ENCODE measurements at regions of chr14 and their contacts with region 1.

Region 1: DNA sequence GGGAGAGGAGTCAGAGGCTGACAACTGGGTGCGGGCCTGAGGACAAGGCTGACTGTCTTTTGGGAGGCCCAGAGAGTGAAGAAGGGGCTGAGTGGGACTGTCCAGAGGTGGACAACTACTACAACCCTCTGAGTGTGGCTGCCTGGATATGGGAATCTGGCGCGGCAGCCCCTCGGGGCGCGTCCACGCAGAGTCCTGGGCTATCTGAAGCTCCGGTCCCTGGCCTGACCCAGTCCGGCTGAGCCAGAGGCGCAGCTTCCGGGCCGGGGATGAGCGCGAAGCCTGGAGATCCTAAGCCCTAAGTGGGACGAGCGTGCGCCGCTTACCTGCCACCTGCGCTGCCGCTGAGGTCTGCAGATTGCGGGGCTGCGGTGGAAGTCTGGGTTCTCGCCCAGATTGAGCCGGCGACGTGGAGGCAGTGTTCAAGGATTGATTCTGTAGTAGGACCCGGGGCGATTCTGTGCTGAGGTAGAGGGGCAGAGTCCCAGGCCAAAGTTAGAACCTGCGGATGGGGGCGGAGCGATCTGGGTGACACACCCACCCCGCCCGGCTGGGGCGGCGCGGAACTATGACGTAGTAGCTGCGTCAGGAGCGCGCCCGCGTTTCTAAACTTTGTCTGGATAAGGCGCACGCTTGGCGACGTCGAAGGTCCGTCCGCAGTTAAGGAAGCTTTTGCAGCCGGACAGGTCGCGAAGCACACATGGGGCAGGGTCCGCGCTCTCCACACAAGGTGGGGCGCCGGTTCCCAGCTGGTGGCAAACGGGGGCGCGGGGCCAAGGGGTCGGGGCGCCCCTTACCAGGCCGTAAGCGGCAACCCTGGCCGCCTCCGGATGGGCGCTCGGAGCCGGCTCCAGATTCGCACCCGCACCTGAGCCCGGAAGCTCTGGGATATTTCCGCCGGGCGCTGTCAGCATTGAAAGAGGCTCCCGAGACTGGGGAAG is at the starts of genes DHRS1 and NOP9:
- DNase-seq: peak; percentile 91
- H3K4me3 Mint-ChIP-seq: peak within 1 kb of the TSS; percentile 95
- H3K27ac Mint-ChIP-seq: peak within 1 kb of the TSS; percentile 78
- H3K4me1 Mint-ChIP-seq: peaks cover 33% of the 10 kb centered on the region
- H3K27me3 Mint-ChIP-seq: no peaks in the 10 kb centered on the region
- CTCF ChIP-seq: no peak
- total RNA-seq, gene DHRS1: 29.2 and 29.7 TPM in 2 replicates
- total RNA-seq, gene NOP9: 29.8 and 31.9 TPM in 2 replicates

Region 2: GRCh38 chr14:24108336-24108874 is 191.1 kb before region 1 on chr14:
- CTCF ChIA-PET with region 1: interaction called, 5 read pairs
- POLR2A ChIA-PET with region 1: interaction called, 4 read pairs
- intact Hi-C with region 1: loop called (anchors 5 kb)
- DNase-seq: no peak
- H3K4me3 Mint-ChIP-seq: no peak overlapping the region
- H3K27ac Mint-ChIP-seq: no peak overlapping the region
- H3K4me1 Mint-ChIP-seq: peaks cover 11% of the 10 kb centered on the region
- H3K27me3 Mint-ChIP-seq: no peaks in the 10 kb centered on the region
- CTCF ChIP-seq: no peak

Region 3: GRCh38 chr14:24232121-24232644 is 67.3 kb before region 1 on chr14 and contains the start of gene NEDD8:
- CTCF ChIA-PET with region 1: interaction called, 414 read pairs
- POLR2A ChIA-PET with region 1: interaction called, 16 read pairs
- intact Hi-C with region 1: no loop called
- DNase-seq: peak; percentile 98
- H3K4me3 Mint-ChIP-seq: peak within 1 kb of the TSS; percentile 77
- H3K27ac Mint-ChIP-seq: peak within 1 kb of the TSS; percentile 70
- H3K4me1 Mint-ChIP-seq: peaks cover 24% of the 10 kb centered on the region
- H3K27me3 Mint-ChIP-seq: no peaks in the 10 kb centered on the region
- CTCF ChIP-seq: no peak
- total RNA-seq, gene NEDD8: 233 and 243 TPM in 2 replicates

Region 4: GRCh38 chr14:24259252-24259995 is 40.1 kb before region 1 on chr14:
- CTCF ChIA-PET with region 1: interaction called, 392 read pairs
- POLR2A ChIA-PET with region 1: interaction called, 62 read pairs
- intact Hi-C with region 1: no loop called
- DNase-seq: peak; percentile 66
- H3K4me3 Mint-ChIP-seq: peak overlapping the region; percentile 57
- H3K27ac Mint-ChIP-seq: peak overlapping the region; percentile 97
- H3K4me1 Mint-ChIP-seq: peaks cover 47% of the 10 kb centered on the region
- H3K27me3 Mint-ChIP-seq: no peaks in the 10 kb centered on the region
- CTCF ChIP-seq: no peak

Region 5: GRCh38 chr14:24284491-24285035 is 15.0 kb before region 1 on chr14:
- CTCF ChIA-PET with region 1: interaction called, 131 read pairs
- POLR2A ChIA-PET with region 1: interaction called, 65 read pairs
- intact Hi-C with region 1: no loop called
- DNase-seq: no peak
- H3K4me3 Mint-ChIP-seq: no peak overlapping the region
- H3K27ac Mint-ChIP-seq: no peak overlapping the region
- H3K4me1 Mint-ChIP-seq: peaks cover 27% of the 10 kb centered on the region
- H3K27me3 Mint-ChIP-seq: no peaks in the 10 kb centered on the region
- CTCF ChIP-seq: no peak